ENCODE measurements at regions of chr20 and their contacts with region 1.

Region 1: GRCh38 chr20:47479093-47479492 is 22.6 kb upstream of the NCOA3 start:
- DNase-seq: no peak
- H3K4me3 ChIP-seq: no peak overlapping the region
- H3K27ac ChIP-seq: no peak overlapping the region
- H3K4me1 ChIP-seq: no peaks in the 10 kb centered on the region
- H3K27me3 ChIP-seq: no peaks in the 10 kb centered on the region
- CTCF ChIP-seq: no peak

Region 2: DNA sequence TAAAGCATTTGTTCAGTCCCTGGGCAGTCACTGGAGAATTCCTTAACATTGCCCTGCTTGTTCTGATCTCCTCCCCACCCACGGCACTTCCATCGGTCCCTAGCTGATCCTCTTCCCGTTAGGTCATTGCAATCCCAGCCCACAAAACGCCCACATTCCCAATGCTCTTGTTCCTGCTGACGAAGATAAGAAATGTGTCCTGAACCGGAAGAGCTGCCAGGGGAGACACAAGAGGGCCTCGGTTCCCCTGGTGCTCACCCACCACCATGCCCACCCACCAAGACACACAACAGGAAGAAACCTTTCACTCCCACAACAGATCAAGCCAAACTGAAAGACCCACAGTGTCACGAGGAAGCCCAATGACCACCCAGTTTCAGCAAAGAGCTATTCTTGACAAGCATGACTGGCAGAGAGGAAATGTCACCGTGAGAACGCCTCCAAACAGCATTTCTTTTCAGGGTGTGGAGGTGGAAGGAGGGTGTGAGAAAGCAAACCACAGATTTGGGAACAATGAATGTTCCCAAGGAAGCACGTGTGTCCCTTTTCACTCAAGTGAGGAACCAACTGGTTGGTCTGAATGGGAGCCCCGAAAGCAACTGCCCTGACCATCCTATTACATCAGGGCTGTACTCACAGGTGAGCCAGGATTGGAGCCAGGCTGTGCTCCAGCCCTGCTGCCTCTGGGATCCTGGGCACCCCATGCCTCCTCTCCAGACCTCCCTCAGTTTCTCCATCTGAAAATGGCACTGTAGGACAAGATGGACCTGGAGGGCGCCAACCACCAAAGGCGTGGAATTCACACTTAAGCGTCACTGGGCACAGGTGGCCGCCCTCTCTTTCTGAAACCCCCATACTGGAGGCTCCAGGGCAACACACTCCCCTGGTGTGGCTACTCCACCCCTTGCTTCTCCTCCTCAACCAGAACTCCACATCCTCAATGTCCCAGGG is 220.1 kb before region 1 on chr20:
- CTCF ChIA-PET with region 1: no interaction called
- POLR2A ChIA-PET with region 1: no interaction called
- intact Hi-C with region 1: no loop called
- DNase-seq: peak; percentile 24
- H3K4me3 ChIP-seq: no peak overlapping the region
- H3K27ac ChIP-seq: peak overlapping the region; percentile 49
- H3K4me1 ChIP-seq: peaks cover 13% of the 10 kb centered on the region
- H3K27me3 ChIP-seq: no peaks in the 10 kb centered on the region
- CTCF ChIP-seq: no peak

Region 3: GRCh38 chr20:47464380-47465101 is 14.6 kb before region 1 on chr20:
- CTCF ChIA-PET with region 1: no interaction called
- POLR2A ChIA-PET with region 1: no interaction called
- intact Hi-C with region 1: no loop called
- DNase-seq: peak; percentile 87
- H3K4me3 ChIP-seq: no peak overlapping the region
- H3K27ac ChIP-seq: no peak overlapping the region
- H3K4me1 ChIP-seq: peaks cover 13% of the 10 kb centered on the region
- H3K27me3 ChIP-seq: no peaks in the 10 kb centered on the region
- CTCF ChIP-seq: peak; percentile 41; the same call in 1 of the 2 replicates

Region 4: DNA sequence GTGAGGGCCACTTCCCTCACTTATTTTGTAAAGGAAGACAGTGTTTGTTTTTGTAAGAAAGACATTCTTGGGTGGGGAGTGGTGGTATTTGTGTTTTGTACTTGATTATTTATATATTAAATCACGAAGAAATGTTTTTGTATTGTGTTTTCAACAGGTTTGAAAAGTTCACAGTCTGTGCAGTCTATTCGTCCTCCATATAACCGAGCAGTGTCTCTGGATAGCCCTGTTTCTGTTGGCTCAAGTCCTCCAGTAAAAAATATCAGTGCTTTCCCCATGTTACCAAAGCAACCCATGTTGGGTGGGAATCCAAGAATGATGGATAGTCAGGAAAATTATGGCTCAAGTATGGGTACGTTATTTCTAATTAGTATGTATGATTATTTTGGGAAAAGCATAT is 159.8 kb after region 1 on chr20:
- CTCF ChIA-PET with region 1: no interaction called
- POLR2A ChIA-PET with region 1: interaction called, 12 read pairs
- intact Hi-C with region 1: no loop called
- DNase-seq: no peak
- H3K4me3 ChIP-seq: no peak overlapping the region
- H3K27ac ChIP-seq: no peak overlapping the region
- H3K4me1 ChIP-seq: no peaks in the 10 kb centered on the region
- H3K27me3 ChIP-seq: no peaks in the 10 kb centered on the region
- CTCF ChIP-seq: no peak